ENCODE measurements at regions of chr11 and their contacts with region 1.

Region 1: DNA sequence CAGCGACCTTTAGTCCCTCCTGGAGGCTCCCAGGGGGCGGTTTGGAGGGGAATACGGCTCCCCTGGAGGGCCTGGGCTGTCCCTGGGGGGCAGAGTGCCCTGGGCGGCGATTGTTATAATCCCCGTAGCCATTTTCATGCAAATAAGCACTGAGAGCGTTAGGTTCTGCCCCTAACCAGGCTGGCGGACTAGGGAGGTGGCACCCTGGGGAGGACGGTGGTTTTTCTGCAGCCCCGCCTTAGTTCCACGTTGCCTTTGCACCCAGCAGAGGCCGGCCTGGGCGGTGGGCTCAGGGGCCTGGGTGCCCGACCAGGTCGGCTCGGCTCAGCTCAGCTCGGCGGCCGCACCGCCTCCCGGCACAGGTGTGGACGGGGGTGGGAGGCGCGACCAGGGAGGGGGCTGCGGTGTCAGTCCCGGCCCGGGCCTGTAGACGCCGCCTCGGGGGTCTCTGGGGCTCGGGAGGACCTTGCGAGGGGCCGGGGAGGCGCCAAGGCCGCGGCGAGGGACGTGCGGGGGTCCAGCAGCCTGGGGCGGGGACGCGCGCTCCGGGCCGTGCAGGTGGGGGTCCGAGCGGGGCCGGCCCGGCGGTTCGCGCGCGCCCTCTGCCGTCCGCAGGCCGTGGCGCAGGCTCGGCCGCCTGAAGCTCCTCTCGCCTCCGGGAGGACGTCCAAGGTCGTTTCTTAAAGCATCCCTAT is 2.3 kb upstream of the DUSP8 start:
- DNase-seq: peak in 1 of 2 donors; percentile 59
- ATAC-seq: peak; percentile 12 to 50 (median 45)
- H3K4me3 ChIP-seq: peak overlapping the region in 9 of 10 donors; percentile 38 to 77 (median 67)
- H3K27ac ChIP-seq: peak overlapping the region in 8 of 10 donors; percentile 11 to 88 (median 74)
- H3K4me1 ChIP-seq: peaks cover 15 to 46% (median 38%) of the 10 kb centered on the region in 9 donors
- H3K27me3 ChIP-seq: peaks cover 0 to 56% (median 0%) of the 10 kb centered on the region in 7 donors
- CTCF ChIP-seq: peak; percentile 67 to 99 (median 82)

Region 2: DNA sequence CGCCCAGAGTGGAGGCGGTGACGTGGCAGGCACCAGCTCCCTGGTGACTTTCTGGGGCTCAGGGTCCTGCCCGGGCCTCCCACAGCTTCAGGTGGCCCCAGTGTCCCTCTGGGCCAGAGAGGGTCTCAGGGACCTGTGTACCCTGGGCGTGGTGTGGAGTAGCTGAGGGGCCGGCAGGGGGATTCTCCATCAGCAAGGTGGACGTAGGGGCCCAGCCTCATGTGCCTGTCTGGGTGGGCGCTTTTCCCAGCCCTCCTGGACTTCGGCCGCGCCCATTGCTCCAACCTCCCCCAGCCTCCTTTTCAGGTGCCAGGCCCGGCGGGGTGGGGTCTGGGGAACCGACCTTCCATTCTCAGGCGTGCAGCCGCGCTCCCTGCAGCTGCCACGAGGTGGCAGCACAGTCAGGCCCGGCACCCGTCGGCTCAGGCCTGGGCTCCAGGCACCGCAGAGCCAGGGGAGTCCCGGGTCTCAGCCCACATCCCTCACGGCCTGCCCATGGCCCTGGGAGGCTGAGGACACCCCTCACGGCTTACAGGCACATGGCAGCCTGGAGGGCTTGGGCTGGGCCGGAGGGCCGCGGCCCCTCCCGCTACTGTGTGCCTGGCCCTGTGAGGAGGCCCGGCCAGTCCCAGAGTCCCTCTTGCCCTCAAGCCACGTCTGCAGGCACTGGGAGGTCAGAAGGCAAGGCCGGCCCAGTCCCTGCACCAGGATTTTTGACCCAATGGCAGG is 371.4 kb before region 1 on chr11:
- intact Hi-C with region 1: loop called in 6 of 10 experiments (anchors 2 to 5 kb)
- DNase-seq: peak; percentile 23 to 64
- ATAC-seq: peak; percentile 67 to 85 (median 74)
- H3K4me3 ChIP-seq: no peak overlapping the region
- H3K27ac ChIP-seq: no peak overlapping the region
- H3K4me1 ChIP-seq: peaks cover 0 to 7% (median 3%) of the 10 kb centered on the region in 9 donors
- H3K27me3 ChIP-seq: peaks cover 0 to 47% (median 38%) of the 10 kb centered on the region in 7 donors
- CTCF ChIP-seq: peak; percentile 86 to 95 (median 92)

Region 3: GRCh38 chr11:1541474-1542204 is 32.7 kb before region 1 on chr11:
- intact Hi-C with region 1: loop called in 7 of 10 experiments (anchors 1 to 5 kb)
- DNase-seq: peak in 1 of 2 donors; percentile 10
- ATAC-seq: peak in 2 of 8 donors; percentile 20 to 34
- H3K4me3 ChIP-seq: no peak overlapping the region
- H3K27ac ChIP-seq: no peak overlapping the region
- H3K4me1 ChIP-seq: peaks cover 4 to 15% (median 10%) of the 10 kb centered on the region in 9 donors
- H3K27me3 ChIP-seq: peaks cover 0 to 32% (median 13%) of the 10 kb centered on the region in 7 donors
- CTCF ChIP-seq: no peak

Region 4: GRCh38 chr11:1546536-1547400 is 27.6 kb before region 1 on chr11:
- intact Hi-C with region 1: loop called in 8 of 10 experiments (anchors 1 to 5 kb)
- DNase-seq: peak; percentile 40 to 56
- ATAC-seq: peak; percentile 22 to 71 (median 52)
- H3K4me3 ChIP-seq: peak overlapping the region in 9 of 10 donors; percentile 41 to 55 (median 52)
- H3K27ac ChIP-seq: peak overlapping the region in 9 of 10 donors; percentile 65 to 96 (median 82)
- H3K4me1 ChIP-seq: peaks cover 16 to 30% (median 25%) of the 10 kb centered on the region in 9 donors
- H3K27me3 ChIP-seq: peaks cover 0 to 53% (median 32%) of the 10 kb centered on the region in 7 donors
- CTCF ChIP-seq: peak; percentile 43 to 89 (median 78)

Region 5: GRCh38 chr11:1706634-1707400 is 132.4 kb after region 1 on chr11:
- intact Hi-C with region 1: no loop called
- DNase-seq: no peak
- ATAC-seq: peak in 7 of 8 donors; percentile 42 to 85 (median 66)
- H3K4me3 ChIP-seq: no peak overlapping the region
- H3K27ac ChIP-seq: no peak overlapping the region
- H3K4me1 ChIP-seq: no peaks in the 10 kb centered on the region
- H3K27me3 ChIP-seq: peaks cover 0 to 15% (median 0%) of the 10 kb centered on the region in 7 donors
- CTCF ChIP-seq: peak in 7 of 9 donors; percentile 28 to 54 (median 42)